ENCODE measurements at regions of chr20 and their contacts with region 1.

Region 1: GRCh38 chr20:64079273-64080012 is at the start of gene RGS19:
- DNase-seq: peak; percentile 98
- H3K4me3 ChIP-seq: peak within 1 kb of the TSS; percentile 62 to 96 (median 81)
- H3K27ac ChIP-seq: peak within 1 kb of the TSS; percentile 84 to 97 (median 89)
- H3K4me1 ChIP-seq: peaks cover 29 to 94% (median 85%) of the 10 kb centered on the region in 6 donors
- H3K27me3 ChIP-seq: peaks cover 0 to 17% (median 8%) of the 10 kb centered on the region in 7 donors
- CTCF ChIP-seq: peak in 5 of 11 experiments; percentile 10 to 30 (median 21)
- POLR2A ChIP-seq: peak in 2 of 3 donors; percentile 13 to 23
- total RNA-seq, gene RGS19: 91.6 to 186 (median 107) TPM

Region 2: GRCh38 chr20:63471002-63471718 is 608.3 kb before region 1 on chr20:
- intact Hi-C with region 1: no loop called
- DNase-seq: no peak
- H3K4me3 ChIP-seq: peak overlapping the region in 4 of 8 donors; percentile 10 to 63 (median 23)
- H3K27ac ChIP-seq: no peak overlapping the region
- H3K4me1 ChIP-seq: peaks cover 0 to 27% (median 14%) of the 10 kb centered on the region in 6 donors
- H3K27me3 ChIP-seq: peaks cover 3 to 98% (median 89%) of the 10 kb centered on the region in 7 donors
- CTCF ChIP-seq: no peak
- POLR2A ChIP-seq: no peak

Region 3: DNA sequence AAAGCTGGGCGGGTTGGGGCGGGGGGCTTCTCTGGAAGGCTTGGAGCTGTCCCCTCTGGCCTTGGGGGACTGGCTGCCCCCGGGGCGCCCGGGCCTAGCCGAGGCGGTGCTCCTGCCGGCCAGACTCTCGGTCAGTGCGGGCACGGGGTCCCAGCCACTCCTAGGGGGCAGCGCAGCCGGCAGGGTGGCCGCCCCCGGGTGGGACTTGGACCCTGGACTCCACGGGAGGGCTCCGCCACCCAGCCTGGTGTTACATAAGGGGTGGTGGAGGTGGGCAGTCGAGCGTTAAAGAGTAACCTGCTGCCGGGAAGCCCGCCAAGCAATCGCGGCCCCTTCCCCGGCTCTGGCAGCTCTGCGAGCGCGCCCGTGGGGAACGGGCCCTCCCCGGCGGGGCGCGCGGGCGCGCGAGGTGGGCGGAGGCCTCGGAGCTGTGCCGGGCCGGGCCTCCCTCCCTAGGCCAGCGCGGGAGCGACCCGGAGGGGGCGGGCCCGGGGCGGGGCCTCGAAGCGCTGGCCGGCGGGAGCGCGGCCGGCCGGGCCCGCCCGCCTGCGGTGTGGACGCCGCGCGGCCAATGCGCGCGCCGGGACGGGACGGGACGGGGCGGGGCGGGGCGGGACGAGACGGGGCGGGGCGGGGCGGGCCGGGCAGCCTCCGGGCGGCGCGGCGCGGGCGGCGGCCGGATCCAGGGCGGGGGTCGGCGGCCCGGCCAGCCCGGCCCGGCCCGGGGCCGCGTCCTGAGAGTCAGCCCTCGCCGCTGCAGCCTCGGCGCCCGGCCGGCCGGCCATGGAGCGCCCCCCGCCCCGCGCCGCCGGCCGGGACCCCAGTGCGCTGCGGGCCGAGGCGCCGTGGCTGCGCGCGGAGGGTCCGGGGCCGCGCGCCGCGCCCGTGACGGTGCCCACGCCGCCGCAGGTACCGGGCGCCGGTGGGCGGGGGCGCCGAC is 340.0 kb before region 1 on chr20 and contains the start of gene SLC2A4RG:
- intact Hi-C with region 1: no loop called
- DNase-seq: peak; percentile 95
- H3K4me3 ChIP-seq: peak within 1 kb of the TSS; percentile 42 to 90 (median 65)
- H3K27ac ChIP-seq: peak within 1 kb of the TSS; percentile 81 to 90 (median 87)
- H3K4me1 ChIP-seq: peaks cover 45 to 91% (median 71%) of the 10 kb centered on the region in 6 donors
- H3K27me3 ChIP-seq: peaks cover 0 to 19% (median 0%) of the 10 kb centered on the region in 7 donors
- CTCF ChIP-seq: no peak
- POLR2A ChIP-seq: no peak
- total RNA-seq, gene SLC2A4RG: 39.9 to 107 (median 64.8) TPM

Region 4: GRCh38 chr20:64119681-64120341 is 40.4 kb after region 1 on chr20:
- intact Hi-C with region 1: loop called (anchors 5 kb)
- DNase-seq: peak; percentile 77
- H3K4me3 ChIP-seq: peak overlapping the region in 2 of 8 donors; percentile 17 to 58
- H3K27ac ChIP-seq: peak overlapping the region in 2 of 8 donors; percentile 40 to 55
- H3K4me1 ChIP-seq: peaks cover 0 to 15% (median 11%) of the 10 kb centered on the region in 6 donors
- H3K27me3 ChIP-seq: peaks cover 0 to 23% (median 6%) of the 10 kb centered on the region in 7 donors
- CTCF ChIP-seq: no peak
- POLR2A ChIP-seq: no peak

Region 5: GRCh38 chr20:64269604-64270411 is 190.4 kb after region 1 on chr20:
- intact Hi-C with region 1: no loop called
- DNase-seq: no peak
- H3K4me3 ChIP-seq: no peak overlapping the region
- H3K27ac ChIP-seq: no peak overlapping the region
- H3K4me1 ChIP-seq: peaks cover 0 to 13% (median 2%) of the 10 kb centered on the region in 6 donors
- H3K27me3 ChIP-seq: no peaks in the 10 kb centered on the region
- CTCF ChIP-seq: no peak
- POLR2A ChIP-seq: no peak